ENCODE measurements at regions of chr7 and their contacts with region 1.

Region 1: GRCh38 chr7:54917613-54918391 is 101.0 kb upstream of the EGFR start:
- DNase-seq: no peak
- ATAC-seq: no peak
- H3K4me3 ChIP-seq: no peak overlapping the region
- H3K27ac ChIP-seq: no peak overlapping the region
- H3K4me1 ChIP-seq: no peaks in the 10 kb centered on the region
- H3K27me3 ChIP-seq: no peaks in the 10 kb centered on the region
- CTCF ChIP-seq: no peak
- POLR2A ChIP-seq: no peak

Region 2: DNA sequence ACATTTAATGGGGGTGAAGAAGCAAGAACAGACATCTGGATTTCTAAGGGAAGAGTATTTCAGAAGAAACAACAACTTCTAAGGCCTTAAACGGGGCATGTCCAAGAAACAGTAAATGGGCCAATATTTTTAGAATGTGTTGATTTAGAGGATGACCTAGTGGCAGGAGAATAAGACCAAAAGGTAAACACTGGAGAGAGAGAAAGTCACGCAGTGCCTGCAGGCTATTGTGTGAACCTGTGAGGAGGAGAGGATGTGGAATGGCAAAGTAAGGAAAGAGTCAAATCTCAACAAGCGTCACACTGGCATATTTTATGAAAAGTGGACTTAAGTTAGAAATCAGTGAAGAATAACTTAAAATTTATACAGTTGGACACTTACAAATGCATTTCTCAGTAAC is 22.9 kb after region 1 on chr7:
- intact Hi-C with region 1: loop called in 1 of 10 experiments (anchors 2 kb)
- DNase-seq: no peak
- ATAC-seq: no peak
- H3K4me3 ChIP-seq: no peak overlapping the region
- H3K27ac ChIP-seq: no peak overlapping the region
- H3K4me1 ChIP-seq: no peaks in the 10 kb centered on the region
- H3K27me3 ChIP-seq: peaks cover 0 to 22% (median 0%) of the 10 kb centered on the region in 9 donors
- CTCF ChIP-seq: no peak
- POLR2A ChIP-seq: no peak

Region 3: DNA sequence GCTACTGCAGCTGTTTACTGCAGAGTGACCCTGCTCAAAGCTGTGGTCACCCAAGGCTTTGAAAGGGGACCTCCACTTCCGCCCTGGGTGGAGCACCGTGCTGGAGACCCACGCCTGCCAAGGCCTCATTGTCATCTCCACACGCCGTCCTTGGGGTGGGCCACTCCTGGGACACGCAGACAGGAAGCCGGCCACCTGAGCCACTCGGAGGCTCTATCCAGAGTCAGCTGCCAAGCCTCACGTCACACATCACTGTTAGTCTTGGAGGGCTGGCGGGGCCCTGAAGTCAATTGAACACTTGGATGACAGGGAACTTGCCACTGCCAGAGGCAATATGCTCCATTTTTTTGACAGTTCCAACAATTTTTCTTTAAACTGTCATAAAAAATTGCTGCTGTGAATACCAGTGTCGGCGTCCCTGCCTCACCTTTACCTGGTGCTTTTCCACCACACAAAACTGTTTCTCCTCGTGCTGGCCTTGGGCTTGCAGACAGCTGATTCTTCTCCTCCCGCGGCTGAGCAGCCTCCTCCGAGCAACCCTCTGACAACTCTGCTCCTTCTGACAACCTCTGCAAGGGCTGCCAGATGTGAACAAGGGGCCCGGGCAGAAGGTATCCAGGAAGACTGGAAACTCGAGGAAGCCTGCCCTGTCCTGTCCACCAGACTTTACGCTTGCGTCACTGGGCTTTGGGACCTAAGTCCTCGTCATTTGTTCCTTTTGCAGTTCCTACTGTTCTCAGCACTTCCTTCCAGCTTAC is 182.9 kb after region 1 on chr7:
- intact Hi-C with region 1: no loop called
- DNase-seq: peak; percentile 88 to 97 (median 90)
- ATAC-seq: peak; percentile 80 to 92 (median 85)
- H3K4me3 ChIP-seq: peak overlapping the region in 2 of 12 donors; percentile 2 to 10
- H3K27ac ChIP-seq: peak overlapping the region in 11 of 12 donors; percentile 51 to 89 (median 68)
- H3K4me1 ChIP-seq: peaks cover 0 to 58% (median 22%) of the 10 kb centered on the region in 12 donors
- H3K27me3 ChIP-seq: no peaks in the 10 kb centered on the region
- CTCF ChIP-seq: no peak
- POLR2A ChIP-seq: no peak